Activated CD4-positive, alpha-beta T cell treated with anti-CD3 and anti-CD28 coated beads for 36 hours (primary cell): ENCODE measurements at regions of chr17 and their contacts with region 1.

Region 1: DNA sequence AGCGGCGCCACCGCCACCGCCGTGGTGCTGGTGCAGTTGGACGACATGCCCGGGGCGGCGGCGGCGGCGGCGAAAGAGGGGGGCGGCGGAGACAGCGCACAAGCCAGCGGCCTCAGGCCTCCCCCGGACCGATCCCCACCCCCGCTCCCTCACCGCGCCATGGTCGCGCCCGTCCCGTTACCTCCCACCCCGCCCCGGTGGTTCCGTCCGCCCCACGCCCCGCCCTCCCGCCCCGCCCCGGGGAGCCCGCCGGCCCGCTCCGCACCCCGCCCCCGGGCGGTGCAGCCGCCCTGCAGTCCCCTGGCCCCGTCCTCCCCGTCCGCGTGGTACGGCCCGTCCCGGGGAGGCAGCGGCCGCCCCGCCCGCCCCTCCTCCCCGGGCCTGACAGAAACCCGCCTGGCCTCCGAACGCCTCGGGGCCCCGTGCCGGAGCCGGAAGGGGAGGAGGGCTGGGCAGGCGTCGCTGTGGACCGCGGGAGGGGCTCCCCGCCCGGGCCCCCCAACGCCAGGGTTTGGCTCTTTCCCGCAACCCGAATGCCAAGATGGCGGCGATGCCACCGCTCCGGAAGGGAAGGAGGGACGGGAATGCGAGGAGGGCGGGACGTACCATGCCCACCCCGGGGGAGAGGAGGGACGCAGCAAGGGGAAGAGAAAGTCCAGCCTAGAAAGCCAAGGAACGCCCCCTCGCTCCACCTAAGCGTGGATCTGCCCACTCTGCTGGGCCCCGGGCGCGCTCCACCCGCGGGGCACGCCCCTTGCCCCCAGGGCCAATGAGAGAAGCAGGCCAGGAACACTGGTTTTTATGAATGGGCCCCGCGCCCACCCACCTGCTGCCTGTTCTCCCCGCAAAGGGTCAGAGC is at the start of gene PIP4K2B:
- DNase-seq: peak; percentile 93
- ATAC-seq: peak; percentile 83
- H3K4me3 Mint-ChIP-seq: peak within 1 kb of the TSS; percentile 99
- H3K27ac Mint-ChIP-seq: peak within 1 kb of the TSS; percentile 94
- H3K4me1 Mint-ChIP-seq: peaks cover 33% of the 10 kb centered on the region
- H3K27me3 Mint-ChIP-seq: no peaks in the 10 kb centered on the region
- total RNA-seq, gene PIP4K2B: 36.3 to 41.6 TPM

Region 2: DNA sequence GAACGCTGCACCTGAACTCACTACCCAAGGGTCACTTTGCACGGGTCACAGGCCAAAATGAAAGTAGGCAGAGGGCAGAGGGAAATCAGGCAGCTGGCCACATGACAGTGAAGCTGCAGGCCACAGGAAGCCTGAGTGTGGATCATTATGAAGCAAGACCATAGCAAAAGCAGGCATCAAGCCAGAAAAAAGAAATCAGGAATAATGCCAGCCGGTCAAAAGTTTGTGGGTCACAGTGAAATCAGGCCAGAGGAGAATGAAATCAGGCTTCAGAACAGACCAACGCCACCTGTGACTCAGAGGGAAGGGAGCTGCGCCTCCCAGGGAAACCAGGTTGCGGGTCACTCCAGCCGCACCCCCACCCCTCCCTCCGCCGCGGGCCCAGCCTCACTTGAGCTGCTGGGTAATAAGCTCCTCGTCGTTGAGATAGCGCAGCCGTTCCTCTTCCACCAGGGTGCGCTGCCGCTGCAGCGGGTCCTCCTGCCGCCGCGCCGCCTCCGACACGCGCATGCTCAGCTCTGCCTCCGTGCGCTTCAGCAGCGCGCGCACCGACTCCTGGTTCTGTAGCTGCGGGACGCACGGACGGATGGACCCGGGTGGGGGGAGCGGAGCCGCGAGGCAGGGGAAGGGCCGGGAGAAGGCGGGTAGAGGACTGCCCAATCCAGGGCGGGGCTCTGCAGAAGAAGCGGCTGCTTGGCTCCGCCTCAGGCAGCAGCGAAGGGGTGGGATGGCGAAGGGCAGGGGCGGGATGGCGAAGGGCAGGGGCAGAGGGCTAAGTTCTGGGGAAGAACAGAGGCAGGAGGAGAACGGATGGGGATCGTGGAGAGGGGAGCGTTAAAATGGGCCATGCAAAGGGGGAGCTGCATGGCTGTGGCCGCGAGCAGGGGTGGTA is 241.5 kb before region 1 on chr17:
- CTCF ChIA-PET with region 1: no interaction called
- POLR2A ChIA-PET with region 1: no interaction called
- intact Hi-C with region 1: loop called in 1 of 2 experiments (anchors 1 kb)
- DNase-seq: peak; percentile 95
- ATAC-seq: peak; percentile 85
- H3K4me3 Mint-ChIP-seq: peak overlapping the region; percentile 73
- H3K27ac Mint-ChIP-seq: no peak overlapping the region
- H3K4me1 Mint-ChIP-seq: peaks cover 22% of the 10 kb centered on the region
- H3K27me3 Mint-ChIP-seq: peaks cover 23% of the 10 kb centered on the region

Region 3: DNA sequence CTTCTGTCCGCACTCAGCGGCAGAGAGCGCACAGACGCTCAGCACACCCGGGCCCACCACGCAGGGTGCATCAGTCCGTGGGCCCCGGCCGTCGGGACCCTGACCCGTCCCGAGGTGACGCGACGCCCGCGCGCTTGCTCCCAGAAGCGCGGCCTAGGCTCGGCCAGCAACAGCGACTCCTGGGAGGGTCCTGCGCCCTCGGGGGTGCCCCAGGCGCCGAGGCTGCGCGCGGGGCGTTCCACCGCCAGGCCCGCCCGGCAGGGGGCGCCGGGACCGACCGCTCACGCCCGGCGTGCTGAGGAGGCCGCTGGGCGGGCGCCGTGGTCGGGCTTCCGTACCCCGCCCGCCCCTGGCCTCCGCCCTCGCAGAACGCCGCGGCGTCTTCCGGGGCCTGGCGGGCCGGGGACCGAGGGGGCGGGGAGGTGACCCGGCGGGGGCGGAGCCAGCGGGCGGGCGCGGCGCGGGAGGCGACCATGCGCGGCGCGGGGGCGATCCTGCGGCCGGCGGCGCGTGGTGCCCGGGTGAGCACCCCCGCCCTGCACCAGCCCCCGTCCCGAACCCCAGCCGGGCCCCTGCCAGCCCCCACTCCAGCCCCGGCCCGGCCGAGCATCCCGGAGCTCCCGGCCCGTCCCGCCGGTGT is 69.6 kb before region 1 on chr17 and contains the start of gene CISD3:
- CTCF ChIA-PET with region 1: interaction called, 3 read pairs
- POLR2A ChIA-PET with region 1: no interaction called
- intact Hi-C with region 1: loop called in 1 of 2 experiments (anchors 1 kb)
- DNase-seq: peak; percentile 92
- ATAC-seq: peak; percentile 66
- H3K4me3 Mint-ChIP-seq: peak within 1 kb of the TSS; percentile 91
- H3K27ac Mint-ChIP-seq: peak within 1 kb of the TSS; percentile 100
- H3K4me1 Mint-ChIP-seq: peaks cover 81% of the 10 kb centered on the region
- H3K27me3 Mint-ChIP-seq: no peaks in the 10 kb centered on the region
- total RNA-seq, gene CISD3: 49.4 to 58.6 TPM

Region 4: GRCh38 chr17:38786372-38786771 is 13.2 kb before region 1 on chr17:
- CTCF ChIA-PET with region 1: no interaction called
- POLR2A ChIA-PET with region 1: no interaction called
- intact Hi-C with region 1: no loop called
- DNase-seq: no peak
- ATAC-seq: no peak
- H3K4me3 Mint-ChIP-seq: no peak overlapping the region
- H3K27ac Mint-ChIP-seq: no peak overlapping the region
- H3K4me1 Mint-ChIP-seq: no peaks in the 10 kb centered on the region
- H3K27me3 Mint-ChIP-seq: no peaks in the 10 kb centered on the region

Region 5: DNA sequence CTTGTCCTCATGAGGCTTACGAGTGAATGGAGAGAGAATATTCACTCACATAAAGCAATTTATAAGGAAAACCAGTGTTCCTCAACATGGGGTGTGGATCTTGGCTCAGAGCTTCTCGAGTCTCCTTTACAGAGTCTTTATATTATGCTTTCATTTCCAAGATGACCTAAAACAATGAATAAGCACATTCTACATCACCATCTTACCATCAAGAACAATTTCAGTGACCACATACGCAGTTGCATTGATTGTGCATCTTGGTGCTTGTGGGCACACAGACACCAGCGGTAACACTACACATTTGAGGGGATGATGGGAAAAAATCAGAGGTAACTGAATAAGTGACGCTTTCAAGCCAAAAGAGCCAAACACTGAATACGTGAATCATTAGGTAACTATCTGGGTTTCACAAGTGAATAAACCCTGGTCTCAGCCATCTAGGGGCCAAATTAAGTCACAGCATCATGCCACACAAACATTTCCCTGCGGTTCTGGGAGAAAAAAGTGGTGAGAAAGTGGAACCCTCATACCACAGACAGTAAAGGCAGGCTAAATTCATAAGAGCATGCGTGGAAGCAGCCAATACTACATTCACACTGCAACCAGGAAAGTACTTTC is 16.1 kb after region 1 on chr17:
- CTCF ChIA-PET with region 1: interaction called, 4 read pairs
- POLR2A ChIA-PET with region 1: interaction called, 3 read pairs
- intact Hi-C with region 1: loop called in 1 of 2 experiments (anchors 2 kb)
- DNase-seq: peak; percentile 47
- ATAC-seq: peak; percentile 88
- H3K4me3 Mint-ChIP-seq: no peak overlapping the region
- H3K27ac Mint-ChIP-seq: no peak overlapping the region
- H3K4me1 Mint-ChIP-seq: peaks cover 8% of the 10 kb centered on the region
- H3K27me3 Mint-ChIP-seq: no peaks in the 10 kb centered on the region

Region 6: GRCh38 chr17:38853292-38854219 is 53.9 kb after region 1 on chr17 and contains the start of gene RPL23:
- CTCF ChIA-PET with region 1: no interaction called
- POLR2A ChIA-PET with region 1: no interaction called
- intact Hi-C with region 1: loop called in 1 of 2 experiments (anchors 1 kb)
- DNase-seq: peak; percentile 96
- ATAC-seq: peak; percentile 87
- H3K4me3 Mint-ChIP-seq: peak within 1 kb of the TSS; percentile 99
- H3K27ac Mint-ChIP-seq: peak within 1 kb of the TSS; percentile 99
- H3K4me1 Mint-ChIP-seq: peaks cover 46% of the 10 kb centered on the region
- H3K27me3 Mint-ChIP-seq: no peaks in the 10 kb centered on the region
- total RNA-seq, gene RPL23: 1,886 to 1,896 TPM

Region 7: GRCh38 chr17:39057701-39058206 is 258.1 kb after region 1 on chr17:
- CTCF ChIA-PET with region 1: no interaction called
- POLR2A ChIA-PET with region 1: no interaction called
- intact Hi-C with region 1: loop called in 1 of 2 experiments (anchors 1 kb)
- DNase-seq: no peak
- ATAC-seq: no peak
- H3K4me3 Mint-ChIP-seq: peak overlapping the region; percentile 67
- H3K27ac Mint-ChIP-seq: no peak overlapping the region
- H3K4me1 Mint-ChIP-seq: peaks cover 15% of the 10 kb centered on the region
- H3K27me3 Mint-ChIP-seq: no peaks in the 10 kb centered on the region